WTC11 (cell line): ENCODE measurements at regions of chr11 and their contacts with region 1.

Region 1: DNA sequence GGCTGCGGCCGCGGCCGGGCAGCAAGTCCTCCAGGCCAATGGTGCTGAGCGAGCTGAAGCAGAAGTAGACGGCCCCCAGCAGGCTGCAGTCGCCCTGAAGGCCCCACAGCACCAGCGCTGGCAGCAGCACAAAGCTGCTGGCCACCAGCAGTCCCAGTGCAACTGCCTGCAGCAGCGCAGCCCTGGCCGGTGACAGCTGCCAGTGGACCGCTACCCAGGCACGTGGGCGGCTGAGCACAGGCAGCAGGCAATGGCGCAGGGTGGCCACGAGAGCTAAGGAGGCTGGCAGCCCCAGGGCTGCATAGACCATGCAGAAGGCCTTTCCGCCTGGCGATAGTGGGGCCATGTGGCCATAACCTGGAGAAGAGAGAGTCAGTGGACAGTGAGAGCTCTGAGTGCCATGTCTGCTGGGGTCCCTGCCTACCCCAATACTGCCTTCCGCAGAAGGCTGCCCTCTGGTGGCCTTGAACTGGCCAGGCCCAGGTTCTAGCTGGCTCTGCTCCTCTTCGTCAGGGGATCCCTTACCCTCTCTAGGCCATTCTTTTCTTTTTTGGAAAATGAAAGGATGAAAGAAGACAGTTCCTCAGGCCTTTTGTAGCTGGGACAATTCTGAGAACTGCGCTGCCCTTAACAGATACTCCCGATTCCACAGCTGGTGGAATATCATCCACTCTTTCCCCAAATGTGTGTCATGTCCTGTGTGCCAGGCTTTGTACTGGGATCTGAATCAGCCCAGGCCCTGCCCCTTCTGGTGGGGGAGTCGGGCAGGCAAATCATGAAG is 1.9 kb downstream of the KCNK7 start:
- DNase-seq: peak; percentile 80
- ATAC-seq: peak; percentile 49
- H3K4me3 Mint-ChIP-seq: peak overlapping the region; percentile 65
- H3K27ac Mint-ChIP-seq: no peak overlapping the region
- H3K4me1 Mint-ChIP-seq: peaks cover 19% of the 10 kb centered on the region
- H3K27me3 Mint-ChIP-seq: peaks cover 49% of the 10 kb centered on the region
- CTCF ChIP-seq: peak; percentile 52

Region 2: DNA sequence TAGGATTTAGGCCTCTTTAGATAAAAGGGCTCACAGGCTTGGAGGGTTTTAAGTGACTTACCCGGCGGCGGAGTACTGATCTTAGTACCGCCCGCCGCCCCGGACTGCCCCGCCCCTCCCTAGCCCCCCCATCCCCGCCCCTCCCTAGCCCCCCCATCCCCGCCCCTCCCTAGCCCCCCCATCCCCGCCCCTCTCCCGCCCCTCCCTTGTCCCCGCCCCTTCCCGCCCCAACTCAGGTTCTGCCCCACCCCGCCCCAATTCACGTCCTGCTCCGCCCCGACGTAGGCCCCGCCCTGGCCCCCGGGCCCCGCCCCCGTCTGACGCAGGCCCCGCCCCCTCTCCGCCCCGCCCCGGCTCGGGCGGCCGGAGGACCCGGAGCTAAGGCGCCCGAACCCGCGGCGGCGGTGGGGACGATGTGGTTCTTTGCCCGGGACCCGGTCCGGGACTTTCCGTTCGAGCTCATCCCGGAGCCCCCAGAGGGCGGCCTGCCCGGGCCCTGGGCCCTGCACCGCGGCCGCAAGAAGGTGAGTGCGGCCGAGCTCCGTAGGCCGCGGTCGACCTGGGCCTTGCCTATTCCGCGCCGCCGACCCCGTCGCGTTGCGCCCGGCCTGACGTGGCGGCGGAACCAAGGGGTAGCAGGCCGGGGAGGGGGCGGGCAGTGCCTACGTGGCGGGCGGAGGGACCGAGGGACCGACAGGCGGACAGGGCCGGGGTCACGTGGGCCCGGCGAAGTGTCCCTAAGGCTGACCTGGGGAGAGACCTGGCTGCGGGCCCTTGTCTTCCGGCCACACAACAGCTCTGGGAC is 68.8 kb before region 1 on chr11 and contains the start of gene SCYL1:
- CTCF ChIA-PET with region 1: interaction called, 18 read pairs
- POLR2A ChIA-PET with region 1: no interaction called
- DNase-seq: peak; percentile 78
- ATAC-seq: peak; percentile 82
- H3K4me3 Mint-ChIP-seq: peak within 1 kb of the TSS; percentile 73
- H3K27ac Mint-ChIP-seq: no peak within 1 kb of the TSS; the same call in 1 of the 2 replicates
- H3K4me1 Mint-ChIP-seq: peaks cover 19% of the 10 kb centered on the region
- H3K27me3 Mint-ChIP-seq: peaks cover 11% of the 10 kb centered on the region
- CTCF ChIP-seq: no peak
- total RNA-seq, gene SCYL1: 69.6 to 76.8 TPM (median 73.0 TPM) in 3 replicates

Region 3: DNA sequence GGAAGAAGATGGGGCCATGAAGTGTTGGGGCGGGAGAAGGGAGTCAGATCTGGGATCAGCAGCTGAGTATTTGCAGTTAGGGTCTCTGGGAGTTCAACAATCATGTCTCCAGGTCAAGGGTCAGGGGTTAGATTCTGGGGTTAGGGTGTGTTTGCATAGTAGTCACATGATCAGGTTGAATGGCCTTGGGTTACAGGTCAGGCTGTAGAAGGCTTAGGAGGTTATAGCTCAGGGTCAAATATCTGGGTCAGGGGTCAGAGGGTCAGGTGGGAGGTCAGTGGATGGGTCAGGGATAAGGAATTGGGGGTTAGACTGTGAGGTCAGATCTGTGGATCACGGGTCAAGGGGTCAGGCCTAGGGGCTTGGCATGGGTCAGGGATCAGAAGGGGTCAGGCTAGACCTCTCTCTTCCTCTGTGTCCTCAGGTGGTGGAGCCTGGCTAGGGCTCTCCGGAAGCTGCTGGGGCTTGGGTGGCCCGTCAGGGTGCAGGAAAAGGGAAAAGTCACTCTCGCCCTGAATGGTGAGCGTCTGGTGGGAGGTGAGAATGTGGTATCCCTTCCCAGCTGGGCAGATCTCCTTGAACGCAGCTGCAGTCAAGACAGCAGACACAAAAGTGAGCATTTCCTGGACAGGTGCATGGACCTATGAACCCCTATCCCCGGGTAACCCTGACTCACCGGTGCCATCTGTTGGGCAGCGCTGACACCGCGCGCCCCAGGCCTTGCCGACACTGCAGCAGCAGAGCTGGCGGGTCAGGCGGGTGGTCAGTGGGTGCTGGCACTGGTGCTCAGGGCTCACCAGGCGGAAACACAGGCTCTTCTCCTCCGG is 41.9 kb before region 1 on chr11:
- CTCF ChIA-PET with region 1: interaction called, 25 read pairs
- POLR2A ChIA-PET with region 1: no interaction called
- DNase-seq: peak; percentile 89
- ATAC-seq: peak; percentile 64
- H3K4me3 Mint-ChIP-seq: peak overlapping the region; percentile 36; the same call in 1 of the 2 replicates
- H3K27ac Mint-ChIP-seq: no peak overlapping the region
- H3K4me1 Mint-ChIP-seq: peaks cover 42% of the 10 kb centered on the region
- H3K27me3 Mint-ChIP-seq: peaks cover 80% of the 10 kb centered on the region
- CTCF ChIP-seq: peak; percentile 49; the same call in 1 of the 2 replicates

Region 4: DNA sequence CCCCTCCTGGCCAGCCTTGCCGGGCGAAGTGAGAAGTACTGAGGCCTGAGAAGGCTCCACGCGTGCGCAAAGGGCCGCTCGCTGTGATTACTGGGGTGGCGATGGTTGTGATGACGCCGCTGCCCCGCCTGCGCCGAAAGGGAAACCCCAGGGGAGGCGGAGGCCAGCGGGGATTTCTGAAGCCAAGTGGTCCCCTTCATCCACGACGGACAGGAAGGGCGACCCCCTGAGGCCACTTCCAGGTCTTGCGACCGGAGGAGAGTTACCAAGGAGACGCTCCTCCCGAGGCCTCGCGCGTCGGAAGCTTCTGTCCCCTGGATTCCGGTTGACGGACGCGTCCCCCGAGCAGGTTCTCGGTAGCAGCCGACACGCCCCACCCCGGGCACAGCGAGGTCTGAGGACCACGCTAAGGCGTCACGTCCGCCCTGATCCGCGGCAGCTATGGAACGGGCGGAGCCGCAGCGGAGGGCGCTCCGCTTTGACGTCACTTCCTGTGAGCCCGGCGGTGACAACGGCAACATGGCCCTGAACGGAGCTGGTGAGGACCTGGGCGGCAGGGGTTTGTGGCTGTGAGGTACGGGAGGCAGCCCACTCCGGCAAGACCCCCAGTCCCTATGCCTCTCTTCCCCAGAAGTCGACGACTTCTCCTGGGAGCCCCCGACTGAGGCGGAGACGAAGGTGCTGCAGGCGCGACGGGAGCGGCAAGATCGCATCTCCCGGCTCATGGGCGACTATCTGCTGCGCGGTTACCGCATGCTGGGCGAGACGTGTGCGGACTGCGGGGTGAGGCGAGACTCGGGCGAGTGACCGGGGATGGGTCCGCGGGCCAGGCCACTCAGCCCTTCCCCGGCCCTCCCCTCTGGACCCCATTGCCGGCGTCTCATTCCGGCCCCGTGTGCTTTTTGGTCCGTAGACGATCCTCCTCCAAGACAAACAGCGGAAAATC is 23.5 kb before region 1 on chr11 and contains the start of gene ZNRD2:
- CTCF ChIA-PET with region 1: interaction called, 239 read pairs
- POLR2A ChIA-PET with region 1: interaction called, 3 read pairs
- DNase-seq: peak; percentile 98
- ATAC-seq: peak; percentile 75
- H3K4me3 Mint-ChIP-seq: peak within 1 kb of the TSS; percentile 99
- H3K27ac Mint-ChIP-seq: peak within 1 kb of the TSS; percentile 98
- H3K4me1 Mint-ChIP-seq: peaks cover 41% of the 10 kb centered on the region
- H3K27me3 Mint-ChIP-seq: peaks cover 7% of the 10 kb centered on the region
- CTCF ChIP-seq: no peak; the same call in 1 of the 2 replicates
- total RNA-seq, gene ZNRD2: 54.8 to 70.9 TPM (median 55.7 TPM) in 3 replicates

Region 5: DNA sequence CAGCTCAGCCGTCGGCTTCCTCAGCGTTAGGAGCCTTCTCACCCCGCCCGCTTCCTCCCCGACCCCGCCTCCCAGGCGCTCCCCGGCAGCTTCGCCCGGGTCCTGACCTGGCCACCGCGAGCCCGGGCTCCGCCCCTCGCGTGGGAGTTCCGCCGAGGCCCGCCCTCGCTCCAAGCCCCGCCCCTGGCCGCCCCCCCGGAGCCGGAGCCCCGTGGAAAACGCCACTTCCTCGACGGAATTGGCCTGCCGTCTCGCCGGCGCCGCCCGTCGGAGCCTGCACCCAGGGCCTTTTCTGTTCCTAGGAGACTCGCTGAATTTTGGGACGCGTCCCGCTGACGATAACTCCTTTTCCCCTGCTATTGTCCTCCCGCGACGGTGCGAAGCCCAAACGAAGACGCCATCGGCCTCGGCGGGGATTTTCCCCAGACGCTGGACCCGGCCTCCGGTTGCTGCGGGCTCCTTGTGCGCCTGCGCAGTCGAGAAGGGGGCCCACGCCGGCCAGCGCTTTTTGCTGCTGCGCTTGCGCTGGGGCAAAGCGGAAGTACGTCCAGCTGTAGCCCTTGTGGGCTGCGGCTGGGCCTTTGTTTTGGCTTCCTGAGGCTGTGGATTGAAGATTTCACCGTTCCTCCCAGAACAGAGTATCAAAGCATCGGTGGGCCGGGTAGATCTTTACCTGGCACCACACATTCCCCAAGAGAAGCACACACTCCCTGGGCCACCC is 59.0 kb after region 1 on chr11:
- CTCF ChIA-PET with region 1: interaction called, 12 read pairs
- POLR2A ChIA-PET with region 1: no interaction called
- DNase-seq: peak; percentile 90
- ATAC-seq: peak; percentile 84
- H3K4me3 Mint-ChIP-seq: peak overlapping the region; percentile 80
- H3K27ac Mint-ChIP-seq: peak overlapping the region; percentile 96
- H3K4me1 Mint-ChIP-seq: peaks cover 21% of the 10 kb centered on the region
- H3K27me3 Mint-ChIP-seq: peaks cover 3% of the 10 kb centered on the region; the same call in 1 of the 2 replicates
- CTCF ChIP-seq: no peak